ENCODE measurements at regions of chr18 and their contacts with region 1.

Region 1: GRCh38 chr18:63848159-63848558 is 39.3 kb upstream of the SERPINB2 start:
- DNase-seq: no peak
- H3K4me3 Mint-ChIP-seq: no peak overlapping the region
- H3K27ac Mint-ChIP-seq: no peak overlapping the region
- H3K4me1 Mint-ChIP-seq: no peaks in the 10 kb centered on the region
- H3K27me3 Mint-ChIP-seq: peaks cover 13% of the 10 kb centered on the region

Region 2: DNA sequence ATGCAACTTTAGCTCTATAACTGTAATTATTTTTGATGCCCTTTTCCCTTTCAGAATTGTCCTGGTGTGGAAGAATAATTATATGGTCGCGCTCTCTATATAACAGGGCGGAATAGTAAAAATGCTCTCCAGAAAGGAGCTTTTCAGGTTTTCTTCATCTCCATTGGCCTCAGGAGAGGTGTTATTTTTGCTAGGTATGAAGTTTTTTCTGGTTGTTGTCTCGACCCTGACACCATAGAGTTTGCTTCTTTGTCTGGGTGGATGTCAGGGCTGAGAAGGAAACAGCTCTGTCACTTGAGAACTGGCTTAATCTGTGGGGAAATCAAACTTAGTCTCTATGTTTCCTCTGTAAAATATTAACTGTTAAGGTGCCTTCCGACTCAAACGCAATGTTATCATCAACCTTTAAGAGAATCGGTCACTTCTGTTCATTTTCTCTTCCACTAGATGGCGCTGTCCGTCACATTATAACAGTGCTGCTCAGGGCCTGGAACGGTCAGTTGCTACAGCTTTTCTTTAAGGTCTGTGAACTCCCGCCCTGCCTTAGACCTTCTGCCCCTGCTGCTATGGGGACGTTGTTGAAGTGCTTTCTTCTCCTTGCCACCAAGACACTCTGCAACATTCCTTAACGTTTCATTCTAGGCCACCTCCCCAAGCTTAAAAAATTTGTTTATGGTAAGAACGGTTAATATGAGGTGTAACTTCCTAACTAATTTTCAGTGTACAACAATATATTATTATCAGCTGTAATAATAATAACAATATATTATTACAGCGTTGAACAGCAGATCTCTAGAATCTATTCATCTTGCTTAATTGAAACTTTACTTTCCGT is 329.8 kb before region 1 on chr18:
- intact Hi-C with region 1: loop called (anchors 1 kb)
- DNase-seq: peak; percentile 30
- H3K4me3 Mint-ChIP-seq: no peak overlapping the region
- H3K27ac Mint-ChIP-seq: no peak overlapping the region
- H3K4me1 Mint-ChIP-seq: no peaks in the 10 kb centered on the region
- H3K27me3 Mint-ChIP-seq: peaks cover 24% of the 10 kb centered on the region

Region 3: GRCh38 chr18:63823518-63824219 is 24.5 kb before region 1 on chr18:
- intact Hi-C with region 1: loop called (anchors 2 kb)
- DNase-seq: no peak
- H3K4me3 Mint-ChIP-seq: no peak overlapping the region
- H3K27ac Mint-ChIP-seq: no peak overlapping the region
- H3K4me1 Mint-ChIP-seq: peaks cover under 1% of the 10 kb centered on the region
- H3K27me3 Mint-ChIP-seq: peaks cover 12% of the 10 kb centered on the region

Measured in activated T-helper 2 cell treated with anti-CD3 and anti-CD28 coated beads, Interferon-gamma antibody, Interleukin-2, Interleukin-4, amounts not matched to agents 10 μg/mL and 5 μg/mL and 100 μg/mL, durations not matched to agents 14 hours and 24 hours and 36 hours (primary cell).